Lower leg skin (tissue), 4 donors: ENCODE measurements at regions of chr12 and their contacts with region 1.

Region 1: GRCh38 chr12:50151047-50151687 is 16.0 kb downstream of the CERS5 start:
- DNase-seq: no peak
- H3K4me3 ChIP-seq: no peak overlapping the region
- CTCF ChIP-seq: no peak
- POLR2A ChIP-seq: no peak

Region 2: DNA sequence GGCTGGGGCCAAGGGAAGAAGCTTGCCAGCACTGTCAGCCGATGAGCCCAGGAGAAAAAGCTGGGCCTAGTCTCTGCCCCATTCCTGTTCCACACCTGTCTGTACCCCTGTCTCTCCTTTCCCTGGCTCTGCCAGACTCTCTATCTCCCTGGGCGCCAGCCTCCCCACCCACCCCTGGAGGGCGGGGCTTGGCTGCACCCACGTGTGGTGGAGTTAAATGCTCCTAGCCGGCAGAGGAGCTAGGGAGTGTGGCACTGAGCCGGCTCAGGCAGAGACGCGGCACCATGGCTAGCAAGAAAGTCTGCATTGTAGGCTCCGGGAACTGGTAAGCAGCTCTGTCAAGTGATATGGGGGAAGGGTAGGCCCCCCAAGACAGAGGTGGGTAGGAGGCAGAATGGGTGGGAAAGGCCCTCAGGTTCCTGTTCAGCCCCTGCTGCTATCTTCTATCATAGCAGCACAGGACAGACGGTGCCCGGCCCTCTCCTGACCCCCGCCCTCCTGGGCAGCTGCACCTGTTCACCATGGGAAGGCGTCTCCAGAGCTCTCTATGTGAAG is 47.3 kb before region 1 on chr12 and contains the start of gene GPD1:
- intact Hi-C with region 1: no loop called
- DNase-seq: no peak
- H3K4me3 ChIP-seq: no peak within 1 kb of the TSS
- CTCF ChIP-seq: no peak
- POLR2A ChIP-seq: no peak
- total RNA-seq, gene GPD1: 29.9 to 38.8 (median 36.7) TPM

Region 3: DNA sequence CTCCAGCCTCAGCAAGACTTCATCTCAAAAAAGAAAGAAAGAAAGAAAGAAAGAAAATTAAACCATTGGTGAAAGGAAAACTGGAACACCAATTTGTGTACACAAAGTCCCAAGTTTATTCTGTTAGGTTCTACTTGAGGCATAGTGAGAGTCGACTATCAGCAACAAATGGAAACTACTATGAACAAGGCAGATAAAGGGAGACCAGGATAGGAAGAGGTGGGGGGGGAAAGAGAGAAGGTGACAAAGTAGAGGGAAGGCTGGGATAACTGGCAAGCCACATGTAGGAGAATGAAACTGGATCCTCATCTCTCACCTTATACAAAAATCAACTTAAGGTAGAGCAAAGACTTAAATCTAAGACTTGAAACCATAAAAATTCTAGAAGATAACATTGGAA is 996.1 kb after region 1 on chr12:
- intact Hi-C with region 1: loop called (anchors 5 kb)
- DNase-seq: no peak
- H3K4me3 ChIP-seq: no peak overlapping the region
- CTCF ChIP-seq: no peak
- POLR2A ChIP-seq: no peak